Mammary epithelial cell (primary cell): ENCODE measurements at regions of chr16 and their contacts with region 1.

Region 1: GRCh38 chr16:85055503-85056210 is 28.1 kb downstream of the KIAA0513 start:
- DNase-seq: peak; percentile 25
- H3K4me3 ChIP-seq: no peak overlapping the region
- H3K27ac ChIP-seq: no peak overlapping the region
- H3K4me1 ChIP-seq: no peaks in the 10 kb centered on the region
- H3K27me3 ChIP-seq: no peaks in the 10 kb centered on the region
- CTCF ChIP-seq: no peak

Region 2: GRCh38 chr16:84209989-84210388 is 845.7 kb before region 1 on chr16:
- CTCF ChIA-PET with region 1: interaction called, 10 read pairs
- dilution Hi-C with region 1: no loop called
- in situ Hi-C with region 1: no loop called
- intact Hi-C with region 1: no loop called
- DNase-seq: no peak
- H3K4me3 ChIP-seq: no peak overlapping the region
- H3K27ac ChIP-seq: no peak overlapping the region
- H3K4me1 ChIP-seq: no peaks in the 10 kb centered on the region
- H3K27me3 ChIP-seq: no peaks in the 10 kb centered on the region
- CTCF ChIP-seq: peak in 1 of 2 donors; percentile 2

Region 3: DNA sequence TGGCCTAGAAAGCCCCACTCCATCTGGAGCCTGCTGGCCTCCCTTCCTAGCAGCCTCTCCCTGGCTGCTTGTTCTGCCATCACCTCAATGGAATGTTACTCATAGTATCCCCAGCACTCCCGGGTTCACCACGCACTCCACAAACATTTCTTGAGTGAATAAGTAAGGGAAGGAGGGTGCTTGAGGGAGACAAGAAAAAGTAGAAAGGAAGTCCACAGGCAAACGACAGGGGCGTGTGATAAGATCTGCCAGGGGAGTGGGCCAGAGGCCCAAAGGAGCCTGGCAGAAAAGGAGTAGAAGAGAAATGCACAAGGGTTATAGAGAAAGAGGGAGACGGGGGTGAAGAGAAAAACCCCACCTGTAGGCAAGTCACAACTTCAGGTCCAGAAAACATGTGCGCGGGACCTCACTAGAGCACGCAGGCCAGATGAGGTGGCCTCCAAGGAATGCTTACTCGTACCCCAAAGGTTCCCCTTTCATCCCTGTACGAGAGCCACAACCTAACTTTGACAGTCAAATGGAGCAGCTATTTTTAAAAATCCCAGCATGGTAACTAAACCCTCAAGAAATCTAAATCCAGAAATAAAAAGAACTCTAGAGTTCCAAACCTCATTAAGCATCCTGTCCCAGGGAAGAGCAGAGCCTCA is 51.0 kb before region 1 on chr16:
- CTCF ChIA-PET with region 1: no interaction called
- dilution Hi-C with region 1: no loop called
- in situ Hi-C with region 1: no loop called
- intact Hi-C with region 1: no loop called
- DNase-seq: peak; percentile 70
- H3K4me3 ChIP-seq: no peak overlapping the region
- H3K27ac ChIP-seq: peak overlapping the region; percentile 83
- H3K4me1 ChIP-seq: peaks cover 59% of the 10 kb centered on the region
- H3K27me3 ChIP-seq: no peaks in the 10 kb centered on the region
- CTCF ChIP-seq: no peak